ENCODE measurements at regions of chr2 and their contacts with region 1.

Region 1: GRCh38 chr2:95115418-95115817 is 6.2 kb downstream of the MRPS5 start:
- H3K4me3 Mint-ChIP-seq: no peak overlapping the region
- H3K27ac Mint-ChIP-seq: no peak overlapping the region
- H3K4me1 Mint-ChIP-seq: peaks cover 27% of the 10 kb centered on the region
- H3K27me3 Mint-ChIP-seq: no peaks in the 10 kb centered on the region

Region 2: DNA sequence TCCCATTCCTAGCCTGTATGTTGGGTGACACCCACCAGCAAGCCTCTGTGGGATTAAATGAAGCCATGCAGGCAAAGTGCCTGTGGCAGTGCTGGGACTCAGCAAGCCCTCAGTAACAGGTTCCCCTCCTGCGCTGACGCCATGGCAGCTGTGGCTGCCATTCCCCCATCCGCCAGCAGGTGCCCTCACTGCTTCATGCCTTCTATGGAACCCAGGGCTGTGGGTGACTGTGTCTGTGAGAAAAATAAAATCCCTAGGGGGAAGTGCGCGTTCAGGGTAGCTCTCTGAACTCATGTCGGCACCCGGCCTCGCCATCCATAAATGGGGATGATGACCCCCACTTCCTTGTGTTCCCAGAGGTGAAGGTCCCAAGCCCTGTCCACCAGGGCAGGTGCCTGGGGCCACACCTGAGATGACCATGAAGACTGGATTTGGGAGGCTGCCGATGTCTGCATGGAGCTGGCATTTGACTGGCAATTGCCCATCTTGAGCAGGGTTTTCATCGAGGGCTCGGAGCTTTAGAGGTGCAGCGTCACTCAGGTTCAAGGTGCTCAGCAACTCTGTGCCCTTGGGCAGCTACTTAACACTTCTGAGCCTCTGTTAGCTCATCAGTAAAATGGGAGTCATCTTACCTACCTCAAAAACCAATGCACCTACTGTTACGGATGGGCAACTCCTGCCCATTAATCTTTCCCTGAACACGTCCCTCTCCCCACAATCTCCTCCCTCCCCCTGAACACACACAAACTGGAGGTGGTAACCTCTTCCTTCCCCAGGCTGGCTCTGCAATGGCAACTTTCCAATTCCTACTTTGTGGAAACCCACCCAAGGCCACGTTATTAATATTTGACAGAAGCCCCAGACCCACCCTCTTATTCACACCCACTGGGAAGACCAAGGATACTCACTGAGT is 92.9 kb before region 1 on chr2:
- intact Hi-C with region 1: loop called (anchors 2 kb)
- H3K4me3 Mint-ChIP-seq: no peak overlapping the region
- H3K27ac Mint-ChIP-seq: no peak overlapping the region
- H3K4me1 Mint-ChIP-seq: peaks cover 7% of the 10 kb centered on the region
- H3K27me3 Mint-ChIP-seq: peaks cover 53% of the 10 kb centered on the region

Region 3: DNA sequence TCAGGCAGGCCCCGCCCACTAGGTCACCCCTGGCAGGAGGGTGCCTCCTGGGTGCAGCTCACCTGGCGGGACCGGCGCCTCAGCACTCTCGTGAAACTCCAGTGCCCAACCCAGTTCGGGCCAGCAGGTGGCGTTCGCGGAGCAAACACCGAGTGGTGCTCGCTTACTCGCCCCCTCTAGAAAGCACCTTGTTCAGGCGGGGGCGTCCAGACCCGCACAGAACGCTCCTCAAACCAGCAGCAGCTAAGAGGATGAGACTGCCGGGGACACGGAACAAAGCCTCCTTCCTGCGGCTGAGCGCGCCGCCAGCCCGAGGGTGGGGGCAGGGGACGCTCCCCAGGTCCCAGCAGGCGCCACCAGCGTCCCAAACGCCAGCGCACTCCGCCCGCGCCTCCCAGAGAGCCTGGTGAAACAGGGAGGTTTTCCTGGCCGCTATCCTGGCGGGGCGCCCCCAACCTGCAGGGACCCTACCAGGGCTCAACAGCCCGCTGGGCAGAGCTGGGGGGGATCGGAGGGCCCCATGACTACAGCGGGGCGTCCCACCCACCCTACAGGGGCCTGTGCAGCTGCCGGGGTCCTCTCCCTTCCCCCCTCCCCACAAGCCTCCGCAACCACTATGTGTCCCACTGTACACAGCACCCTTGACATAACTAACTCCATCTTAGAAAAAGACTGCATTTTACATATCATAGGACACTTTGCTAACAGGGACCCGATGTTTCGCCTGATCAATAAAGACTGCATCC is 38.5 kb before region 1 on chr2:
- intact Hi-C with region 1: loop called (anchors 2 kb)
- H3K4me3 Mint-ChIP-seq: peak overlapping the region; percentile 65
- H3K27ac Mint-ChIP-seq: no peak overlapping the region
- H3K4me1 Mint-ChIP-seq: peaks cover 11% of the 10 kb centered on the region
- H3K27me3 Mint-ChIP-seq: peaks cover 32% of the 10 kb centered on the region

Region 4: GRCh38 chr2:95273953-95274853 is 158.8 kb after region 1 on chr2 and contains the start of gene PROM2:
- intact Hi-C with region 1: no loop called
- H3K4me3 Mint-ChIP-seq: no peak within 1 kb of the TSS
- H3K27ac Mint-ChIP-seq: no peak within 1 kb of the TSS
- H3K4me1 Mint-ChIP-seq: peaks cover 15% of the 10 kb centered on the region
- H3K27me3 Mint-ChIP-seq: peaks cover 6% of the 10 kb centered on the region

Measured in dendritic cell treated with granulocyte-macrophage colony-stimulating factor and Interleukin-4, amounts not matched to agents 40 ng/mL and 50 ng/mL, for 4 days (primary cell).